Right cardiac atrium (tissue), 5 donors: ENCODE measurements at regions of chr4 and their contacts with region 1.

Region 1: GRCh38 chr4:173494013-173494970 is 35.7 kb downstream of the HAND2 start:
- DNase-seq: peak; percentile 58 to 74 (median 71)
- ATAC-seq: peak; percentile 90 to 91
- H3K4me3 ChIP-seq: peak overlapping the region; percentile 41
- H3K27ac ChIP-seq: no peak overlapping the region
- H3K4me1 ChIP-seq: no peaks in the 10 kb centered on the region
- H3K27me3 ChIP-seq: no peaks in the 10 kb centered on the region

Region 2: DNA sequence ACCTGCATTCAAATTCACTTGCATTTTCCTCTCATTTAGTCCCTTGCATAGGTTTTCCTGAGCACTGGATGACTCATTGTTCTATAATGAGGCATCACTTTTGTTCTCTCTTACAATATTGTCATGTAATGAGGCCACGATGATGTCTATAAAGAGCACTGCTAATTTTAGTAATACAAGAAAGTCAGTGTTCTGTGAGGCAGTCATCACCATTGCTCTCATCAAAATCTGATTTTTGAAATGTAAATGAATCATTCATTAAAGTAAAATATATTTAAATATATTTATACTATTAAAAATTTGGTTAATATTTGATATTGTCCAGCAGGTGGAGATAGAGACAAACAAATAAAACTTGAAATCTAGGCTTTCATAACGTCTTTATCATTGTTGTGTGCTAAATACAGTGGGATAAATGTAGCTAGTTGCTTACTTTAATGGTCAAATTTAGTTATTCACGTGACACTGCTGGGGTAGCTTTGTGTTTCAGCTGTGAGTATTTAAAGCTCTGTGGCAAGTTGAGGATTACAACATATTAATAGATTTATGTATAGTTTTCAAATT is 175.6 kb before region 1 on chr4:
- intact Hi-C with region 1: loop called in 1 of 4 experiments (anchors 10 kb)
- DNase-seq: no peak
- ATAC-seq: peak; percentile 50 to 52
- H3K4me3 ChIP-seq: no peak overlapping the region
- H3K27ac ChIP-seq: no peak overlapping the region
- H3K4me1 ChIP-seq: no peaks in the 10 kb centered on the region
- H3K27me3 ChIP-seq: no peaks in the 10 kb centered on the region

Region 3: GRCh38 chr4:173573286-173573685 is 79.0 kb after region 1 on chr4:
- intact Hi-C with region 1: no loop called
- DNase-seq: no peak
- ATAC-seq: no peak
- H3K4me3 ChIP-seq: no peak overlapping the region
- H3K27ac ChIP-seq: no peak overlapping the region
- H3K4me1 ChIP-seq: peaks cover 3% of the 10 kb centered on the region
- H3K27me3 ChIP-seq: no peaks in the 10 kb centered on the region